ENCODE measurements at regions of chr5 and their contacts with region 1.

Region 1: DNA sequence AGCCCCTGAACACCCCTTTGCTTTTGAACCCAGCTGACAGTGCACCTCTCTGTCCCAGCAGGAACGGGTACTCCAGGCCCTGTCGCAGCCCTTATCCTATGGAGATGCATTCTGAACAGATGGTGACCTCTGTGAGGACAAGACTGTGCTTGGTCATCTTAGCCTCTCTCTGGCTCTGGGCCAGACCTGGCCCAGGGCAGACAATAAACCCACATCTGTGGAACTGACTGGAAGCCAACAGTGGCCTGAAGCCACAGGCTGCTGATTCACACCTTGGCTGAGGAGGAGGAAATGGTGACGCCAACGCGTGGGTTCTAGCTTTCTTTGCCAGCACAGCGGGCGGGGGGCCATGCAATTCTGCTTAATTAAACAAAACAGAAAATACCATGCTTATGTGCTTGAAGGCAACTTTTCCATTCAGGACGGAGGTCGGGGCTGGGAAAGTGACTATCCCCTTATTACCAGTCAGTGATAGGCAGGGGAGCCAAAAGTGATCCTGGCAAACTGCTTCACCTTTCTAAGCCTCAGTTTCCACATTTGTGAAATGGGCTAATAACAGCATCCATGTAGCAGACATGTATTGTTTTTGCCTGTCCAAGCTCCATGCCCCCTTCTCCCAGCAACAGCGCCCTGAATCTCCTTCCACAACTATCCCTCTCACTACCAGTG is 10.8 kb downstream of the SH3PXD2B start:
- DNase-seq: no peak
- H3K4me3 Mint-ChIP-seq: no peak overlapping the region
- H3K27ac Mint-ChIP-seq: no peak overlapping the region
- H3K4me1 Mint-ChIP-seq: peaks cover 10% of the 10 kb centered on the region
- H3K27me3 Mint-ChIP-seq: peaks cover 23% of the 10 kb centered on the region

Region 2: DNA sequence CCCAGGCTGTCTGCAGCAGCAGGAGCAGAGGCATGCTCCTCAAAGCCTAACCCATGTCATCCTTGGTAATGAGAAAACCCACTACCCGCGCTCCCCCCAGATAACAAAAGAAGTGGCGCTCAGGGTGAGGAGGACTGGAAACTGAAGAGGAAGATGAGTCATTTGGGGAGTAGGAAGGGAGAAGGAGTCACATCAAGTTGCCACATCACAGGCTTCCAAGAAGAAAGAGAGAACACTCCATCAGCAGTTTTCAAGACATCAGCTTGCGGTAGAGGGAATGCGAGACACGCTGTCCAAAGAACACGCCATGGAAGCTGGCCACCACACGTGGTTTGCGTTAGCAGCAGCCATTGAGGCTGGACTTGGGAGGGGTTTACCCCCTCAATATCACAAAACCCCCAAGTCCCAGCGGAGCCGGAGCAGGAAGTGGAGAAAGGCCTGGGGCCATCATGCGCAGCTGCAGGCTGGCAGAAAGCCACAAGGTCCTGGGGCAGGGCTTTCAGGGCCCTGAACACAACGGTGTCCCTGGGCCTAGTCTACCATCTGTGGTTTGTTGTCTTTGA is 30.8 kb before region 1 on chr5:
- intact Hi-C with region 1: loop called (anchors 1 kb)
- DNase-seq: no peak
- H3K4me3 Mint-ChIP-seq: no peak overlapping the region
- H3K27ac Mint-ChIP-seq: peak overlapping the region; percentile 1
- H3K4me1 Mint-ChIP-seq: peaks cover 24% of the 10 kb centered on the region
- H3K27me3 Mint-ChIP-seq: no peaks in the 10 kb centered on the region

Region 3: DNA sequence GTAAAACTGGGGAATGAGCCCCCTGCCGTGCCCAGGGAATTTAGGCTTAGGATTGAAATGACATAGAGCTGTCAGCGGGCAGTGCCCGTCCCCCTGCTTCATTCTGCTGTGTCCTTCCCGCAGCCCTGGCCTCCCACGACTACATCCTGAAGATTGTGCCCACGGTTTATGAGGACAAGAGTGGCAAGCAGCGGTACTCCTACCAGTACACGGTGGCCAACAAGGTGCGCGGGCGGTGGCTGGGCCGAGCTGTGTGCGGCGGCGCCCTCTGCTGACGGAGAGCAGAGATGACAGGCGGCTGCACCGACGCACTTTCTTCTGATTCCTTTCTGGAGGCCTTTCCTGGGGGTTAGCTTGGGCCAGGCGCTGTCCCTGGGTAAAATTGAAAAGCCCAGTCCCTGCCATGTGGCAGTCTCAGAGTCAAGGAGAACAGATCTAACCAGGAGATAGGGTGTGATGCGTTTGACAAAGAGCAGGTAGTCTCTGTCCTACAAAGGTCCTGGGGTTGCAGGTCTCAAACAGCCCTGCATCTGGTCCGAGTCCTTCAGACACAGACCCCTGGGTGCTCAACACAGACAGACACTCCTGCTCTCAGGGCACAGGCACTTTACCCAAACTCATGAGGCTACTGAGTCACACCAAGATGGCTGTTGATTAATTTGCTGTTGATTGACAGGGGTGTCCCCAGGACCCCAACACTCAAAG is 488.9 kb after region 1 on chr5:
- intact Hi-C with region 1: no loop called
- DNase-seq: peak; percentile 59
- H3K4me3 Mint-ChIP-seq: no peak overlapping the region
- H3K27ac Mint-ChIP-seq: no peak overlapping the region
- H3K4me1 Mint-ChIP-seq: no peaks in the 10 kb centered on the region
- H3K27me3 Mint-ChIP-seq: no peaks in the 10 kb centered on the region

Measured in activated T-helper 2 cell treated with anti-CD3 and anti-CD28 coated beads, Interferon-gamma antibody, Interleukin-2, Interleukin-4, amounts not matched to agents 10 μg/mL and 5 μg/mL and 100 μg/mL, durations not matched to agents 14 hours and 24 hours and 36 hours (primary cell).